ENCODE measurements at regions of chr17 and their contacts with region 1.

Region 1: GRCh38 chr17:17919169-17920107 is 52.8 kb downstream of the TOM1L2 start:
- DNase-seq: peak; percentile 67
- ATAC-seq: peak; percentile 69
- H3K4me3 ChIP-seq: no peak overlapping the region
- H3K4me3 Mint-ChIP-seq: no peak overlapping the region
- H3K27ac ChIP-seq: no peak overlapping the region
- H3K27ac Mint-ChIP-seq: no peak overlapping the region
- H3K4me1 ChIP-seq: no peaks in the 10 kb centered on the region
- H3K4me1 Mint-ChIP-seq: no peaks in the 10 kb centered on the region
- H3K27me3 ChIP-seq: no peaks in the 10 kb centered on the region
- H3K27me3 Mint-ChIP-seq: no peaks in the 10 kb centered on the region
- CTCF ChIP-seq: peak; percentile 71

Region 2: GRCh38 chr17:17681187-17681848 is 238.1 kb before region 1 on chr17 and contains the start of gene RAI1:
- CTCF ChIA-PET with region 1: interaction called, 38 read pairs
- POLR2A ChIA-PET with region 1: no interaction called
- intact Hi-C with region 1: loop called (anchors 1 kb)
- DNase-seq: peak; percentile 90
- ATAC-seq: peak; percentile 64
- H3K4me3 ChIP-seq: peak within 1 kb of the TSS in 4 of 5 experiments; percentile 66 to 86 (median 72)
- H3K4me3 Mint-ChIP-seq: peak within 1 kb of the TSS; percentile 91
- H3K27ac ChIP-seq: peak within 1 kb of the TSS; percentile 86 to 97
- H3K27ac Mint-ChIP-seq: peak within 1 kb of the TSS; percentile 88
- H3K4me1 ChIP-seq: peaks cover 7 to 19% of the 10 kb centered on the region in 2 donors
- H3K4me1 Mint-ChIP-seq: peaks cover 30% of the 10 kb centered on the region
- H3K27me3 ChIP-seq: peaks cover 0 to 3% (median 0%) of the 10 kb centered on the region in 4 experiments
- H3K27me3 Mint-ChIP-seq: peaks cover 5% of the 10 kb centered on the region
- CTCF ChIP-seq: peak; percentile 74
- total RNA-seq, gene RAI1: 33.6 and 34.0 TPM in 2 replicates

Region 3: GRCh38 chr17:17712268-17712924 is 207.0 kb before region 1 on chr17:
- CTCF ChIA-PET with region 1: no interaction called
- POLR2A ChIA-PET with region 1: no interaction called
- intact Hi-C with region 1: no loop called
- DNase-seq: peak; percentile 34
- ATAC-seq: peak; percentile 69
- H3K4me3 ChIP-seq: no peak overlapping the region
- H3K4me3 Mint-ChIP-seq: peak overlapping the region; percentile 42
- H3K27ac ChIP-seq: no peak overlapping the region
- H3K27ac Mint-ChIP-seq: no peak overlapping the region
- H3K4me1 ChIP-seq: peaks cover 12 to 24% of the 10 kb centered on the region in 2 donors
- H3K4me1 Mint-ChIP-seq: peaks cover 21% of the 10 kb centered on the region
- H3K27me3 ChIP-seq: no peaks in the 10 kb centered on the region
- H3K27me3 Mint-ChIP-seq: no peaks in the 10 kb centered on the region
- CTCF ChIP-seq: no peak

Measured in B cell (primary cell).